Activated CD4-positive, alpha-beta T cell treated with anti-CD3 and anti-CD28 coated beads, Interleukin-2, amount 10 ng/mL, durations not matched to agents 24 days and 14 days (primary cell): ENCODE measurements at regions of chr20 and their contacts with region 1.

Region 1: DNA sequence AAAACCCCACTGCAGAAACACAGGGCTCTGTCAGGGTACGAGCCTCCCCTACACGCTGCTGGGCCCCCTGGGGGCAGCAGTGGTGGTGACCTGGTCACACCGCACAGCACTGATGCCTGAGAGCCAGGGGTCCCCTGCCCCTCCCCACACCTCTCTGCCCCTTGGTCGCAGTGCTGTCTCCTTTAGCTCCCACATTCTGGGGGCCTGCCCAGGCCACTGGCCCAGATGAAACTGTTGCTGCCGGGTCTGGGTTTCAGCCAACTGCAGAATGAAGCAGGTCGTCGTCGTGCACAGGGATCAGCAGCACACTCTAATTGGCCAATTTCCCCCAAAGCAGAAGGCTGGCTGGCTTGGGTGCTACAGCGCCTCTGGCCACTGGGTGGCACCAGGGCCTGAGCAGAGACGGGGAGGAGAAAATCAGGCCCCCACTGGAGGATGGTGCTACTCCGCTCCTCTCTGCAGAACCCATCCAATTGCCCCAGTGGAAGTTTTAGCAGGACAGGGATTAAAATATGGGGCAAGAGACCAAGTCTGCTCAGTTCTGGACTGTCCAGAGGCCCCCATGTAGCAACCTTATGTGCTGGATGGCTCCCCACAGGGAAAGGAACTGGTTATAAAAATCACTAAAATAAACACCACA is 26.1 kb downstream of the DIDO1 start:
- DNase-seq: peak; percentile 92
- H3K4me3 Mint-ChIP-seq: peak overlapping the region; percentile 67
- H3K27ac Mint-ChIP-seq: peak overlapping the region; percentile 78
- H3K4me1 Mint-ChIP-seq: peaks cover 30% of the 10 kb centered on the region
- H3K27me3 Mint-ChIP-seq: no peaks in the 10 kb centered on the region

Region 2: GRCh38 chr20:62832212-62832922 is 67.8 kb before region 1 on chr20:
- intact Hi-C with region 1: no loop called
- DNase-seq: peak; percentile 84
- H3K4me3 Mint-ChIP-seq: no peak overlapping the region
- H3K27ac Mint-ChIP-seq: no peak overlapping the region
- H3K4me1 Mint-ChIP-seq: peaks cover 7% of the 10 kb centered on the region
- H3K27me3 Mint-ChIP-seq: no peaks in the 10 kb centered on the region

Region 3: GRCh38 chr20:62921119-62921687 is 21.0 kb after region 1 on chr20:
- intact Hi-C with region 1: loop called (anchors 1 kb)
- DNase-seq: peak; percentile 89
- H3K4me3 Mint-ChIP-seq: peak overlapping the region; percentile 55
- H3K27ac Mint-ChIP-seq: peak overlapping the region; percentile 89
- H3K4me1 Mint-ChIP-seq: peaks cover 62% of the 10 kb centered on the region
- H3K27me3 Mint-ChIP-seq: no peaks in the 10 kb centered on the region